ENCODE measurements at regions of chr6 and their contacts with region 1.

Region 1: DNA sequence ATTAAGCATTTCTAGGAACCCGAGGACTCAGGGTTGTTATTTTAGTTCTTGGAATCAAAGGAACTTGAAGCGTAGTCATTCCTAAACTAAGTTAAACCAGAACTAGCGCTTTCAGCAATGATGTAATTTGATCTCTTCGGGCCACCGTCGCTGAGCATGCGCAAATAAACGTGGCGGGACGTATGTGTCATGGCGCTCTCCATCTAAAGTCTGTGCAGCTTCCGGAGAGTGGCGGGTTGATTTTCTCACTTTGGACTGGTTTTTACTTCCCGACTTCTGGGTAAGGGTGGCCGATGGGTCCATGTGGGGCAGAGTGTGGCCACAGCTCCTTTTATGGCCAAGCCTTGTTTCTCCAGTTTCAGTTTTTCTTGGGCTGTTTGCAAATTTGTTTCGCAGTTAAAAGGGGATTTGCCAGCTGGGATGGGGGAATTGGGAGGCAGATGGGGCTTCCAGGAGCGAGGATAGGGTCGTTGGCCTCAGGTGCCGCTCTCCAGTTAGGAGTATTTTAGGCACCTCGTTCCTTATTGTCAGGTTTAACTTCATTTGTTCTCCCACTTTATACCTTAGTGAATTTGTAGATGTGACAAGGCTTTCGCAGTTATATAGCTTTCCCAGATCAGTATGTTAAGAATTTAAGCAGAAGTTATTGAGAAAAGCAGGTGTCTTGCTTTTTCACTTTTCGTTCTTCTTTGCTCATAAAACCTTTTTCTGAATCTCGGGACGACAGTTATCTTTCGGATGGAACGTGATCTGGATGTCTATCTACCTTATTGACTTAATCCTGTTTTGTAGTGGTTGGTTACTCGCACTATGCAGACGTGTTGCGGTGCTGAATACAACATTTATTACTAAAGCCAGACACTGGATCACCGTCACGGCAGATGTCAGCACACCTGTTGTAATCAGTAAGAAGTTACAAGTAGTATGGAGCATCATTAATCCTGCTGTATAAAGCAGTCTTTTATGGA is at the start of gene CDKAL1:
- DNase-seq: peak; percentile 83
- H3K4me3 ChIP-seq: peak within 1 kb of the TSS; percentile 83
- CTCF ChIP-seq: no peak

Region 2: DNA sequence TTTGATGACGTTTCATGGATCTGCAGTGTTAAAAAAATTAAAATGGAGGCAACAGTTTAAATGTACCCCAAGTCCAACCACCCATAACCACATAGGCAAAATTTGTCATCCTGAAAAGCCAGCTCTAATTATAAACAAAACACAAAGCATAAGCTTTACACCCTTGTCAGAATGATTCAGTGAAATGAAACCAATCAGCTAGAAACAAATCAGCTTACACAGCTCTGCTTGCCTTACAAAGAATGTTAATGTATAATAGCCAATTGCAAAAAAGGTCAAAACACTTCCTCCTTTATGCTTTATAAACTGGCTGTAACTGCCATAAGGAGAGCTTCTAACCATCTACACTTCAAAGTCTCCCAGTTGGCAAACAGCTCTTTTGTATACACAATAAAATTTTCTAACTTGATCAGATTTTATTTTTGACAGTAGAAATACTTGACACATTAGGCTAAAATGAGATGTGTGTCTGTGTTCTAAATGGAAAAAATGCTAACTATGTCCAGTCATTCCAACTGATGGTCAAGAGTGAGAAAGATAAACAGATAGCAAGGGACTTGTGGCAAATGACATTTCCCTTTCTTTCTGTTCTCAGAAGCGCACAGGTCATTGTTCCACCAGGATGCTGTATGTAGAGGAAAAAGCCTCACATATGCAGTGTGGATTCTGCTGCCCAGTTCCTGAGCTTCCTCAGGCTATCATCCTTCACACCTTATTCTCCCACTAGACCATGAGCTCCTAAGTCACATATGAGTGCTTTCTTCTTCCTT is 1041.8 kb before region 1 on chr6:
- in situ Hi-C with region 1: no loop called
- DNase-seq: no peak
- H3K4me3 ChIP-seq: no peak overlapping the region
- CTCF ChIP-seq: no peak

Region 3: GRCh38 chr6:20291764-20292580 is 242.6 kb before region 1 on chr6:
- in situ Hi-C with region 1: loop called (anchors 25 kb)
- DNase-seq: peak; percentile 79
- H3K4me3 ChIP-seq: no peak overlapping the region
- CTCF ChIP-seq: peak; percentile 94

Region 4: DNA sequence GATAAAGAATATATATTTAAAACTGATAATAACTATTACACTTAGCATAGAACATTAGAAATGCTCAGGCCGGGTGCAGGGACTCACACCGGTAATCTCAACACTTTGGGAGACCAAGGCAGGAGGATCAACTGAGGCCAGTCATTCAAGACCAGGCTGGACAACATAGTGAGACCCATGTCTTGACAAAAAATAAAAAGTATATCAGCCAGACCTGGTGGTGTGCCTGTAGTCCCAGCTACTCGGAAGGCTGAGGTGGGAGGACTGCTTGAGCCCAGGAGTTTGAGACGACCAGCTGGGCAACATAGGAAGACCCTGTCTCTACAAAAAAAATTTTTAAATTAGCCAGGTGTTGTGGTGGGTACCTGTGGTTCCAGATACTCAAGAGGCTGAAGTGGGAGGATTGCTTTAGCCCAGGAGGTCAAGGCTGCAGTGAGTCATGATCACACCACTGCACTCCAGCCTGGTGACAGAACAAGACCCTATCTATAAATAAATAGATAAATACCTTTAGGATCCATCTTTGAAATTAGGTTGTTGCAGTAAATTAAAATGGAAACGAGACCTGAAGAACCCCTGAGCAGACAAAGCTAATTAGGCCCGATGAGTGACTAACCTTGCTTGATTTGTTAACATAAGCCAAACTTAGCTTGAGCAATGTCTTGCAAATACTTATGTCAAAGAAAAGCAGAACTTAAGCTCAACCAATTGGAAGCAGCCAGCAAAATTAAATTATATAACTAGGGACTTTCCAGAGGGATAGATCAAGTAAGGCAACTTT is 208.7 kb before region 1 on chr6:
- in situ Hi-C with region 1: no loop called
- DNase-seq: no peak
- H3K4me3 ChIP-seq: no peak overlapping the region
- CTCF ChIP-seq: no peak

Region 5: DNA sequence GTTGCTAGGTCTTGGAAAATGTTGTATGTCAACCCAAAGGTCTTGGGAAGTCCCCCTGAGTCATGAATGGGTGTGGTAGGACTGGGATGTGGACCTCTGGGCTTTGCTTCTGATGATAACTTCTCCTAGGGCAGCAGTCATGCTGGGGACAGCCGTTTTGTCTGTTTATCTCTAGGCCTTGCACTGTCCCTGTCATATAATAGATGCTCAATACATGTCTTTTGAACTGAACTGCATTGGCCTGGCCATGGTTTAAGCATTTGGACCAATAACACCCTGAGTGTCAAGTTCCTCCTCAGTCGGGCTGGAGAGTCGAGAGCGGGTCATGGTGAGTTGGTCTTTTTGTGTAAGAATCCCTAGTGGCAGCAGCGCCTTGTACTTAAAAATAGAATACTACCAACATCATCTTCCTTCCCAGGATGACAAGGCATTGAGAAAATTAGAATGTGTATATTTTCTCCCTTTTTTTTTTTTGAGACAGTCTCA is 89.8 kb before region 1 on chr6:
- in situ Hi-C with region 1: no loop called
- DNase-seq: no peak
- H3K4me3 ChIP-seq: no peak overlapping the region
- CTCF ChIP-seq: no peak

Measured in astrocyte of the cerebellum (primary cell).